Naive thymus-derived CD4-positive, alpha-beta T cell (primary cell): ENCODE measurements at regions of chr19 and their contacts with region 1.

Region 1: DNA sequence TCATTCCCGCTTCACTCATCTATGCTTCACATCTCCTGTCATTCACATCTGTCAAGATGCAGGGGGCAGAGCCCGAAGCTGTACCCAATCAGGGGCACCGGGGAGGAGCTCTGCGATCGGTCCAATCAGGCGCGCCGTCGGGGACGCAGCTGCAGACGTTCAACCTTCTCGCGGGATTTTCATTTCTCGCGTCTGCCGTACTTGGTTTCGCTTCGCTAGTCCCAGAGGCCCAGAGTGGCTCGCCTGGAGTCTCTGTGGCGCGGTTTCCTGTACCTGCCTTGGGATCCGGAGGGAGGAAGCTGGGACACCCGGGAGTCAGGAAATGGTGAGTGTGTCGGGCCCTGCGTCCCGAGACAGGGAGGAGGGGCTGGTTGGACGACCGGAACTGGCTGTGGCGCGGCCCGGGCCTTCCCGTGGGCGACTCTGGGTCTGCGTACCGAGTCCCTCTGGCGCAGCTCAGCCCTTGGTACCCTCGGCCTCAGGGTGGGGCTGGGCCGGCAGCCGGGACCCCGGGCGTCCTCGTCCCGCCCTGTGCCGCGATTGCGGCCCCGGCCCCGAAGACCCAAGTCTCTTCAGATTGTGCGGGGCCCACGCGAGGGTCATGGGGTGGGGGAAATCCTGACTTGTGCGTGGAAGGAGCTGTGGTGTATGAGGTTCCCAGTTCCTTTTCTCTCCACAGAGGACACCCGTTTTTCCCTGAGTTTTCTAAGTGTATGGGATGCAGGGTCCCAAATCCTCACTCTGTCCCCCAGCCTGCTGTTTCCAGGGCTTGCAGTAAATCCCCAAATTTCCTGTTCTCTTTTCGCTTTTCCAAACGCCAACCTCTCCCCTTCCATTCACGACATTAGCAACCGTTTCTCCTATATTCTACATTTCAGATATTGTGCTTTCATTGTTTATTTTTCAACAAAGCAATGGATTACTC is at the start of gene ZNF136:
- DNase-seq: peak; percentile 77 to 95 (median 91)
- ATAC-seq: peak; percentile 99
- H3K4me3 ChIP-seq: peak within 1 kb of the TSS; percentile 78
- H3K4me3 Mint-ChIP-seq: peak within 1 kb of the TSS; percentile 88 to 100 (median 98)
- H3K27ac ChIP-seq: peak within 1 kb of the TSS; percentile 96
- H3K27ac Mint-ChIP-seq: peak within 1 kb of the TSS; percentile 88 to 100 (median 98)
- H3K4me1 ChIP-seq: peaks cover 7 to 15% of the 10 kb centered on the region in 2 donors
- H3K4me1 Mint-ChIP-seq: peaks cover 28 to 64% (median 46%) of the 10 kb centered on the region in 7 donors
- H3K27me3 ChIP-seq: no peaks in the 10 kb centered on the region
- H3K27me3 Mint-ChIP-seq: no peaks in the 10 kb centered on the region
- total RNA-seq, gene ZNF136: 16.8 to 36.8 (median 31.1) TPM

Region 2: GRCh38 chr19:12035220-12036153 is 127.7 kb before region 1 on chr19 and contains the start of gene ZNF433:
- CTCF ChIA-PET with region 1: no interaction called
- POLR2A ChIA-PET with region 1: no interaction called
- intact Hi-C with region 1: no loop called
- DNase-seq: peak; percentile 22 to 65 (median 53)
- ATAC-seq: peak; percentile 98
- H3K4me3 ChIP-seq: peak within 1 kb of the TSS; percentile 69
- H3K4me3 Mint-ChIP-seq: peak within 1 kb of the TSS; percentile 70 to 94 (median 88)
- H3K27ac ChIP-seq: peak within 1 kb of the TSS; percentile 58
- H3K27ac Mint-ChIP-seq: peak within 1 kb of the TSS in 8 of 9 donors; percentile 13 to 91 (median 62)
- H3K4me1 ChIP-seq: no peaks in the 10 kb centered on the region
- H3K4me1 Mint-ChIP-seq: peaks cover 0 to 31% (median 15%) of the 10 kb centered on the region in 7 donors
- H3K27me3 ChIP-seq: no peaks in the 10 kb centered on the region
- H3K27me3 Mint-ChIP-seq: peaks cover 0 to 2% (median 0%) of the 10 kb centered on the region in 5 donors
- total RNA-seq, gene ZNF433: 0.10 to 2.2 (median 1.2) TPM

Region 3: DNA sequence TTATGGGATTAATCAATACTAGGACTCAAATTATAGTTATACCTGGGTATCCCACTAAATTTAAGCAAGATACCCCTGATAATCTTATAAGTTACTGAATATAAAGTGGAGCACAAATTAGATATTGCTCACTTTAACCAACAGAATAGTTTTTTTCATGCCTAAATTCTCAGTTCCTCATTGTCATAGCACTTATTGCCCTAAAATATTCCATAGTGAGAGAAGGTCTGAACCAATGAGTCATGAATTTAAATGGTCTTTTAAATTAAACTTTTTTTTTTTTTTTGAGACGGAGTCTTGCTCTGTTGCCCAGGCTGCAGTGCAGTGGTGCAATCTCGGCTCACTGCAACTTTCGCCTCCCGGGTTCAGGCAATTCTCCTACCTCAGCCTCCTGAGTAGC is 42.2 kb after region 1 on chr19:
- CTCF ChIA-PET with region 1: no interaction called
- POLR2A ChIA-PET with region 1: no interaction called
- intact Hi-C with region 1: no loop called
- DNase-seq: no peak
- ATAC-seq: no peak
- H3K4me3 ChIP-seq: no peak overlapping the region
- H3K4me3 Mint-ChIP-seq: no peak overlapping the region
- H3K27ac ChIP-seq: no peak overlapping the region
- H3K27ac Mint-ChIP-seq: no peak overlapping the region
- H3K4me1 ChIP-seq: no peaks in the 10 kb centered on the region
- H3K4me1 Mint-ChIP-seq: peaks cover 4 to 23% (median 15%) of the 10 kb centered on the region in 7 donors
- H3K27me3 ChIP-seq: no peaks in the 10 kb centered on the region
- H3K27me3 Mint-ChIP-seq: no peaks in the 10 kb centered on the region

Region 4: DNA sequence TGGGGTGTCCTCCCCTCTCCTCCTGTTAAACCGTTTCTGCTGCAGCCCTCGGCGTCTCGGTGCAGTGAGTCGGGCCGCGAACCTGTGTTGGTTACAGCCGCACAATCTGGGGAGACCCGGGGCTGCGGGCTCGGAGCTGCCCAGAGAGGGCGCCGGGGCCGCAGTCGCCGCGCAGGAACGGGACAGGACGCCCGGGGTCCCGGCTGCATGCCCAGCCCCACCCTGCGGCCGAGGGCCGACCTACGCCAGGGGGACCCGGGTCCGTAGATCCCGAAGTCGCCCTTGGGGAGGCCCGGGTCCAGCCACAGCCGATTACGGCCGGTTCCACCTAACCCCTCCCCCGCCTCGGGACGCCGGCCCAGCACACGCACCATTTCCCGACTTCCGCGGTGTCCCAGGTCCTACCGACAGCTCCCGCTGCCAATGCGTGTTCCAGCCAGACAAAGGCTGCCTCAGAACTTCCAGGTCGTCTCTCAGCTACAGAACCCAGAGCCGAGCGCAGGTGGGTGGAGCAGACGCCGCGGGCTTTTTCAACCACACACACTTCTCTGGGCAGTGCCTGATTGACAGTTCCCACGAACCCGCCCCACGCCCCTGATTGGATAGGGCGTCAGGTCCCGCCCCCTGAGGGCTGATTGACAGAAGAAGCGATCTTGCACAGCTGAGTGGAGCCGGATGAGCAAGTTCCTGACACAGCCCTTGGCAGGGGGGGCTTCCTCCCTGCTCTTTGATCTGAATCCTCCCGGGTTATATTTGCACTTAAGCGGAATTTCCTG is 277.6 kb after region 1 on chr19 and contains the start of gene ZNF443:
- CTCF ChIA-PET with region 1: no interaction called
- POLR2A ChIA-PET with region 1: no interaction called
- intact Hi-C with region 1: loop called in 1 of 2 experiments (anchors 2 kb)
- DNase-seq: peak; percentile 93 to 99 (median 98)
- ATAC-seq: peak; percentile 99
- H3K4me3 ChIP-seq: peak within 1 kb of the TSS; percentile 80
- H3K4me3 Mint-ChIP-seq: peak within 1 kb of the TSS; percentile 97 to 100 (median 100)
- H3K27ac ChIP-seq: peak within 1 kb of the TSS; percentile 72
- H3K27ac Mint-ChIP-seq: peak within 1 kb of the TSS; percentile 84 to 99 (median 96)
- H3K4me1 ChIP-seq: no peaks in the 10 kb centered on the region
- H3K4me1 Mint-ChIP-seq: peaks cover 12 to 34% (median 24%) of the 10 kb centered on the region in 7 donors
- H3K27me3 ChIP-seq: no peaks in the 10 kb centered on the region
- H3K27me3 Mint-ChIP-seq: no peaks in the 10 kb centered on the region
- total RNA-seq, gene ZNF443: 3.0 to 9.1 (median 4.1) TPM